Thyroid gland (tissue), 4 donors: ENCODE measurements at regions of chr22 and their contacts with region 1.

Region 1: GRCh38 chr22:40679964-40680818 is 907 bp downstream of the MCHR1 start:
- DNase-seq: no peak
- H3K4me3 ChIP-seq: no peak overlapping the region
- H3K27ac ChIP-seq: no peak overlapping the region
- H3K4me1 ChIP-seq: peaks cover 0 to 13% of the 10 kb centered on the region in 2 donors
- H3K27me3 ChIP-seq: no peaks in the 10 kb centered on the region
- CTCF ChIP-seq: no peak
- POLR2A ChIP-seq: no peak

Region 2: GRCh38 chr22:40764763-40765441 is 84.7 kb after region 1 on chr22:
- intact Hi-C with region 1: loop called (anchors 5 kb)
- DNase-seq: no peak
- H3K4me3 ChIP-seq: no peak overlapping the region
- H3K27ac ChIP-seq: no peak overlapping the region
- H3K4me1 ChIP-seq: no peaks in the 10 kb centered on the region
- H3K27me3 ChIP-seq: no peaks in the 10 kb centered on the region
- CTCF ChIP-seq: no peak
- POLR2A ChIP-seq: no peak

Region 3: GRCh38 chr22:40898850-40899357 is 218.7 kb after region 1 on chr22:
- intact Hi-C with region 1: loop called (anchors 10 kb)
- DNase-seq: no peak
- H3K4me3 ChIP-seq: no peak overlapping the region
- H3K27ac ChIP-seq: no peak overlapping the region
- H3K4me1 ChIP-seq: no peaks in the 10 kb centered on the region
- H3K27me3 ChIP-seq: no peaks in the 10 kb centered on the region
- CTCF ChIP-seq: peak in 5 of 6 experiments; percentile 19 to 73 (median 58)
- POLR2A ChIP-seq: no peak